HCT116 (cell line): ENCODE measurements at regions of chr20 and their contacts with region 1.

Region 1: DNA sequence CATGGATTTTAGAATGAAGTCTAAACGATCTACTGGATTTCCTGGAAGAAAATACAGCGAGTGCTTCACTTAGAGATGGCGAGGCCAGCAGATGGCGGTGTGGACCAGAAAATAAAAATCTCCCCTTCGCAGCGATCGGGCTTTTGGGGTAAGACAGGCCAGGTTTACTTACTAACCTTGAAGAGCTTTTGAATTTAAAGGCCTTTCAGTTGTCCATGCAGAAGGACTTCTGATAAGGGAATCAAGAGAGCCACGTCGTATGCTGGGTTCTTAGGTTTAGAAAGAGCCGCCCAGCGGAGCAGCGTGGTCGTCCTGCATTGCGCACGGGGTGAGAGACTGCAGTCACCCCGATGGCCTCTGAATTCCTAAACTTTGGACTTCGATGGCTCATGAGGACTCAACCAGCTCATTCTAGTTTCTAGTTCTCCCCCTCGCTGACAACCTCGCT is 125.2 kb upstream of the RALGAPA2 start:
- DNase-seq: peak; percentile 38
- ATAC-seq: peak; percentile 89
- H3K4me3 ChIP-seq: no peak overlapping the region
- H3K27ac ChIP-seq: no peak overlapping the region
- H3K4me1 ChIP-seq: no peaks in the 10 kb centered on the region
- H3K27me3 ChIP-seq: no peaks in the 10 kb centered on the region
- CTCF ChIP-seq: peak; percentile 61 to 87 (median 66); a peak in 5 of 6 replicates
- POLR2A ChIP-seq: no peak
- RAD21 ChIP-seq: peak; percentile 71

Region 2: DNA sequence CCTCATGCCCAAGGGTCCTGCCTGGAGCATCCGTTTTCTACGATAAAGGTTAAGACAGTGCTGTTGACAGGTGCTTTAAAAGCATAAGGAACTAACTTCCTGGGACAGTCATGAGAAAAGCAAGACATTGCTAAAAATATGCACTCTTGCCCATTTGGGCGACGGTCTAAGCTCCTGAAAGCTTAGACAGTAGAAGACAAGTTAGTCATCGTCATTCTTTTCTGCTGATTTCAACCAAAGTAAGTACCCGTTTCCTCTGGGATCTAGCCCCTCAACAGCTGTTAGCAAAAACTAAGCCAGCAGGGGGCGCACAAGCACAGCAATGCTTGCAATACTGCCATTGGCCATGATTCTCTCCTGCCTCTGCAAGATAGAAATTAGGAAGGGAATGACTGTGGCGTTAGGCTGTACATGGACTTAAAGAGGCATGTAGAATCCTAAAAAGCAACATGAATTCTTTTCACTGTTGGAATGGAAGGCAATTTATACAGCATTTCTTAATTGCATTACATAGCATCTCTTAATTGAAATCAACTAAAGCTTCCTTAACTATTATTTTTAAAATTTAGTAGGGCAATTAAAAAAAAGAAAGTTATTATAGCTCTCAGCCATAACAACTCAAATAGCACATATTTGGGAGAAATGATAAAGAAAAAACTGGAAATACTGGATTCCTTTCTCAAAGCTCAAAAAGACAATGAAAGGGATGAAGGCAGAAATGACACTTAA is 22.6 kb after region 1 on chr20:
- CTCF ChIA-PET with region 1: interaction called, 12 read pairs
- POLR2A ChIA-PET with region 1: no interaction called
- RAD21 ChIA-PET with region 1: interaction called in 1 of 2 experiments, 3 read pairs
- intact Hi-C with region 1: no loop called
- DNase-seq: peak; percentile 69
- ATAC-seq: peak; percentile 96
- H3K4me3 ChIP-seq: no peak overlapping the region
- H3K27ac ChIP-seq: no peak overlapping the region
- H3K4me1 ChIP-seq: no peaks in the 10 kb centered on the region
- H3K27me3 ChIP-seq: no peaks in the 10 kb centered on the region
- CTCF ChIP-seq: peak; percentile 80 to 99 (median 94)
- POLR2A ChIP-seq: no peak
- RAD21 ChIP-seq: peak; percentile 74

Region 3: GRCh38 chr20:21490095-21490494 is 652.5 kb after region 1 on chr20:
- CTCF ChIA-PET with region 1: no interaction called
- POLR2A ChIA-PET with region 1: no interaction called
- RAD21 ChIA-PET with region 1: no interaction called
- intact Hi-C with region 1: loop called (anchors 5 kb)
- DNase-seq: no peak
- ATAC-seq: peak; percentile 27
- H3K4me3 ChIP-seq: no peak overlapping the region
- H3K27ac ChIP-seq: no peak overlapping the region
- H3K4me1 ChIP-seq: no peaks in the 10 kb centered on the region
- H3K27me3 ChIP-seq: peaks cover 25% of the 10 kb centered on the region
- CTCF ChIP-seq: peak; percentile 29 to 49 (median 42); a peak in 5 of 6 replicates
- POLR2A ChIP-seq: no peak
- RAD21 ChIP-seq: peak; percentile 41; the same call in 1 of the 2 replicates

Region 4: GRCh38 chr20:21571841-21572690 is 734.5 kb after region 1 on chr20:
- CTCF ChIA-PET with region 1: no interaction called
- POLR2A ChIA-PET with region 1: no interaction called
- RAD21 ChIA-PET with region 1: no interaction called
- intact Hi-C with region 1: loop called (anchors 1 kb)
- DNase-seq: no peak
- ATAC-seq: peak; percentile 25; the same call in 1 of the 2 replicates
- H3K4me3 ChIP-seq: no peak overlapping the region
- H3K27ac ChIP-seq: no peak overlapping the region
- H3K4me1 ChIP-seq: no peaks in the 10 kb centered on the region
- H3K27me3 ChIP-seq: peaks cover 24% of the 10 kb centered on the region
- CTCF ChIP-seq: peak; percentile 54 to 92 (median 77); a peak in 5 of 6 replicates
- POLR2A ChIP-seq: no peak
- RAD21 ChIP-seq: peak; percentile 68

Region 5: GRCh38 chr20:22312744-22313346 is 1475.2 kb after region 1 on chr20:
- CTCF ChIA-PET with region 1: no interaction called
- POLR2A ChIA-PET with region 1: no interaction called
- RAD21 ChIA-PET with region 1: no interaction called
- intact Hi-C with region 1: loop called (anchors 5 kb)
- DNase-seq: peak; percentile 23
- ATAC-seq: no peak
- H3K4me3 ChIP-seq: no peak overlapping the region
- H3K27ac ChIP-seq: no peak overlapping the region
- H3K4me1 ChIP-seq: no peaks in the 10 kb centered on the region
- H3K27me3 ChIP-seq: peaks cover 28% of the 10 kb centered on the region
- CTCF ChIP-seq: peak; percentile 21 to 73 (median 64); a peak in 5 of 6 replicates
- POLR2A ChIP-seq: no peak
- RAD21 ChIP-seq: peak; percentile 54